Activated CD4-positive, alpha-beta T cell treated with anti-CD3 and anti-CD28 coated beads for 36 hours (primary cell): ENCODE measurements at regions of chr5 and their contacts with region 1.

Region 1: DNA sequence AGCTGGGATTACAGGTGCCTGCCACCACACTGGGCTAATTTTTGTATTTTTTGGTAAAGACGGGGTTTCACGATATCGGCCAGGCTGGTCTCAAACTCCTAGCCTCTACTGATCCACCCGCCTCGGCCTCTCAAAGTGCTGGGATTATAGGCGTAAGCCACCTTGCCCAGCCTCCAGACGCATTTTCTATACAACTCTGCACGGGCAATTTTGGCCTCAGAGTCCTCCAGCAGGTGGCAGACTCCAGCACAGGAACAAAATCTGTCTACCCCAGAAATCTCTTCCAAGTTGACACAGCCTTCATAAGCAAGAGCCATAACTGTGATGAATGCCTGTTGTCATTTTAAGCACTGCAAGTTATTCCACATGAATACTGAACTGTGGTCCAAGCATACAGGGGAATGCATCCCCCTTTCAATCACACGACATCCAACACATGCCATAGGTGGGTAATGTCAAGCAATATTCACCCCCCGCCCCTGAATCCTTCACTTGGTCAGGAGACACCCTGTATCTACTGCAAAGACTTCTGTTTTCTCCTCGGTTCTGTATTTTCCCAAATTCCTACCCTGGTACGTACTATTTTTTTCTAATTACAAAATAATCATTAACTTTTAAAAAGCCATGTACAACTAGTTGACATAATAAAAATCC is 50.8 kb downstream of the ALDH7A1 start:
- DNase-seq: peak; percentile 61
- ATAC-seq: no peak
- H3K4me3 Mint-ChIP-seq: no peak overlapping the region
- H3K27ac Mint-ChIP-seq: no peak overlapping the region
- H3K4me1 Mint-ChIP-seq: no peaks in the 10 kb centered on the region
- H3K27me3 Mint-ChIP-seq: no peaks in the 10 kb centered on the region

Region 2: GRCh38 chr5:126339215-126339805 is 204.9 kb before region 1 on chr5:
- CTCF ChIA-PET with region 1: interaction called, 173 read pairs
- POLR2A ChIA-PET with region 1: no interaction called
- intact Hi-C with region 1: loop called (anchors 1 kb)
- DNase-seq: peak; percentile 64
- ATAC-seq: peak; percentile 53
- H3K4me3 Mint-ChIP-seq: no peak overlapping the region
- H3K27ac Mint-ChIP-seq: no peak overlapping the region
- H3K4me1 Mint-ChIP-seq: no peaks in the 10 kb centered on the region
- H3K27me3 Mint-ChIP-seq: peaks cover 6% of the 10 kb centered on the region

Region 3: GRCh38 chr5:126443374-126443851 is 100.8 kb before region 1 on chr5:
- CTCF ChIA-PET with region 1: no interaction called
- POLR2A ChIA-PET with region 1: no interaction called
- intact Hi-C with region 1: no loop called
- DNase-seq: peak; percentile 16
- ATAC-seq: peak; percentile 24
- H3K4me3 Mint-ChIP-seq: no peak overlapping the region
- H3K27ac Mint-ChIP-seq: peak overlapping the region; percentile 49
- H3K4me1 Mint-ChIP-seq: peaks cover 64% of the 10 kb centered on the region
- H3K27me3 Mint-ChIP-seq: no peaks in the 10 kb centered on the region

Region 4: GRCh38 chr5:127290019-127290945 is 746.1 kb after region 1 on chr5 and contains the start of gene MEGF10:
- CTCF ChIA-PET with region 1: no interaction called
- POLR2A ChIA-PET with region 1: no interaction called
- intact Hi-C with region 1: no loop called
- DNase-seq: peak; percentile 62
- ATAC-seq: peak; percentile 51
- H3K4me3 Mint-ChIP-seq: peak within 1 kb of the TSS; percentile 7
- H3K27ac Mint-ChIP-seq: no peak within 1 kb of the TSS
- H3K4me1 Mint-ChIP-seq: peaks cover 13% of the 10 kb centered on the region
- H3K27me3 Mint-ChIP-seq: peaks cover 64% of the 10 kb centered on the region
- total RNA-seq, gene MEGF10: not detected